BJ (cell line): ENCODE measurements at regions of chr10 and their contacts with region 1.

Region 1: DNA sequence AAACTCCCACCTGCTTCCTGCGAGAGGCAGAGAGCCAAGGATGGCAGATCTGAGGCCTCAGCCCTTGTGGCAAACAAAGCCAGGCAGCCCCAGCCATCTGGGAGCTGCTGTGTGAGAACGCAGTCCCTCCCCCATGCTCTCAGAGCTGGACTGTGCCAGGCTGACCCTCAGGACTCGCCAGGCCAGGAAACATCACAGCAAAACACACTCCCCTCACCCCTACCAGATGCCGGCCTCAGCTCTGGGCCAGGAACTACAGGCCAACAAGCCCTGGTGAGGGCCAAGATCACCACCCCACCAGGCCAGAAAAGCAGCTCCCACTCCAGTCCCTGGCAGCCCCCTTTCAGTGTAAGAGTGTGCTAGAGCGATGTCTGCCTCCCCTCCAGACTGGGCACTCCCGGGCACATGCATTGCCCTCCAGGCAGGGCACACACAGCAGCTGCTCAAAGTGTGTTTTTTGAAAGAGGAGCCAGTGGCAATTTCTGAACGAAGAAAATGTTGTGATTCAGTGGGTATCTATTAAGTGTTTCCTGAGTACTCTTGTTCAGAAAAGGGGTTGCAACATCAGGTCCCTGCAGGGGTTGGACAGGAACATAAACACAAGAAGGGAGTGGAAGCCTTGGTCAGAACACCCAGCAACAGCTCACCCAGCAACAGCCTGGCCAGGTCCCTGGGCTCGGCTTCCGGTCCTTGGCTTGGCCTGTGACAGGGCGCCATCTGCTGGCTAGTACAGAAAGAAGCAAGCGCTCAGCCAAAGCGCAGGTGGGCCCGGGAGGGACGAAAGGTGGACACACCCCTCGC is 18.3 kb downstream of the LRRC20 start:
- DNase-seq: peak; percentile 81
- H3K4me3 ChIP-seq: peak overlapping the region; percentile 9; the same call in 1 of the 2 replicates
- H3K27me3 ChIP-seq: no peaks in the 10 kb centered on the region
- CTCF ChIP-seq: peak; percentile 95

Region 2: DNA sequence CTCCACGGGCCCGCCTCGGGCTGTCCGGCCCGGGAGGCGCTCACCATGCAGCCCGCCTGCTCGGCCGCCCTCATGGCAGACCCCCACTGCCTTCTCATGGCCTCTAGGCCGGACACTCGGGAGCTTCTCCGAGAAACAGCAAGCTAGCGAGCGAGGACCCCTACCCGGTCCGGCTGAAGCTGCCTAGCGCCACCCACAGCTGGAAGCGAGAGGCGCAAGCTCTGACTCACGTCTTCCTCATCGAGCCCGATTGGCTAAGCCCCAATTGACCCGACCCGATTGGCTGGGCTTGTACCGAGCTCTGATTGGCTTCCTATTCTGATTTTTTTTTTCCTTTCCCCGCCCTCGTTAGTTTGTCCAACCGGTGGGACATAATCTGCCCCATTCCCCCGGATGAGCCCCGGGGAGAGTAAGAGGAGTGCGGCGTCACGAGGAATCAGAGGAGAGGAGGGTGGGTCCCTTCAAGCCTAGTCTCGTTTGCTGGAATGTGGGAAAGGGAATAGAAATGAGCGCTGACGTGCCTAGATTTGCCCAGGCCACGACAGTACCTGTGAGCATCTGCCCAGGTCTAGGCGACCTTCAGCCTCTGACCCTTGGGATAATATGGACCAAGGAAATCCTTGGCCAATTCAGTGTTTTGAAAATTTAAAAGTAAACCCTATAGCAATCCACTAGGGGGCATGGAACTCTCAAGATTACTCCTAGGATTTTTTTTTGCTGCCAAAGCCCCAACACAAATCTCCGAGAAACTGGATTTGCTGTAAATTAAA is 217.5 kb before region 1 on chr10 and contains the start of gene TYSND1:
- CTCF ChIA-PET with region 1: interaction called, 15 read pairs
- POLR2A ChIA-PET with region 1: no interaction called
- DNase-seq: peak; percentile 89
- H3K4me3 ChIP-seq: peak within 1 kb of the TSS; percentile 51
- H3K27me3 ChIP-seq: no peaks in the 10 kb centered on the region
- CTCF ChIP-seq: peak; percentile 90
- polyA plus RNA-seq, gene TYSND1: 2.7 and 5.3 TPM in 2 replicates

Region 3: GRCh38 chr10:70221030-70221429 is 143.1 kb before region 1 on chr10:
- CTCF ChIA-PET with region 1: interaction called, 219 read pairs
- POLR2A ChIA-PET with region 1: interaction called, 4 read pairs
- DNase-seq: no peak
- H3K4me3 ChIP-seq: no peak overlapping the region
- H3K27me3 ChIP-seq: no peaks in the 10 kb centered on the region
- CTCF ChIP-seq: no peak

Region 4: DNA sequence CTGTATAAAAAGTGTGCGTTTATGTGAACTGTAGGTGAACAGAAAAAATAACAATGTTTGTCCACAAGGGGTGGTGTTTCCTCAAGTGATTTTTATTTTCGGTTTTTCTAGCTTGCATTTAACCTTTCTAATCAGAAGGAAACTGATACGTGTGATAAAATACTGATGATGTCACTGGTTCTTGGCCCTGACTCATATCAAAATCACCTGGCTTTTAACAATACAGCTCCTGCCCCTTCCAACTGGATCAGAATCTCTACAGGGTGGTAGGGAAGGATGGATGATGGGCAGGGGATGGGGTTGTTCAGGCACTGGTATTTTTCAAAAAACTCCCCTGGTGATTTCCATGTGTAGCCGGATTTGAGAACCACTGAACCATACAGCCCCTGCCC is 91.2 kb before region 1 on chr10:
- CTCF ChIA-PET with region 1: interaction called, 25 read pairs
- POLR2A ChIA-PET with region 1: no interaction called
- DNase-seq: no peak
- H3K4me3 ChIP-seq: no peak overlapping the region
- H3K27me3 ChIP-seq: peaks cover 6% of the 10 kb centered on the region
- CTCF ChIP-seq: peak; percentile 41; the same call in 1 of the 2 replicates

Region 5: GRCh38 chr10:70348228-70348850 is 15.8 kb before region 1 on chr10:
- CTCF ChIA-PET with region 1: interaction called, 18 read pairs
- POLR2A ChIA-PET with region 1: no interaction called
- DNase-seq: no peak
- H3K4me3 ChIP-seq: no peak overlapping the region
- H3K27me3 ChIP-seq: no peaks in the 10 kb centered on the region
- CTCF ChIP-seq: peak; percentile 73

Region 6: GRCh38 chr10:70381471-70382421 is 17.6 kb after region 1 on chr10:
- CTCF ChIA-PET with region 1: interaction called, 14 read pairs
- POLR2A ChIA-PET with region 1: interaction called, 7 read pairs
- DNase-seq: no peak
- H3K4me3 ChIP-seq: peak overlapping the region; percentile 76
- H3K27me3 ChIP-seq: peaks cover 4% of the 10 kb centered on the region; the same call in 1 of the 2 replicates
- CTCF ChIP-seq: no peak

Region 7: DNA sequence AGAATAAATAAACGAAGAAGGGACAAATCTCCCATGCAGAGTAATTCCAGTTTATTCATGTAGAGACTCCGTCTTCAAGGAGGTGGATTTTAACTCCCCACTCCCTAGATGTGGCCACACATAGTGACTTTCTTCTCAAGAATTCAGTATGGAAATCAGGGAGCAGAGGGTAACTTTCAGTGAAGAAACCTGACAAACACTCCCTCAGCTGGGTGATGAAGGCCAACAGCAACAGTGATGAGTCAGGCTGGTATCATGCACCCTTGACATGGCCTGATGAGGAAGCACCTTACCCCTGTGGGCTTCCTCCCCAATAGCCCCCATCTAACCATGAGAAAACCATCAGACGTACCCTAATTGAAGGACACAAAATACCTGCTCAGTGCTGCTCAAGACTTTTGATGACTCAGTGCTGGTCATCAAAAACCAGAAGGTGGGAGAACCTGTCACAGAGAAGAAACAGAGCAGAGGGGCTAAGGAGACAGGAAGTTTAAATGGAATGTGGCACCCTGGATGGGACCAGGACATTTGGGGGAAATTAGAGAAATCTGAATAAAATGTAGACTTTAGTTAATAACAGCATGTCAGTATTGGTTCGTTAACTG is 358.8 kb after region 1 on chr10:
- CTCF ChIA-PET with region 1: no interaction called
- POLR2A ChIA-PET with region 1: no interaction called
- DNase-seq: peak; percentile 24
- H3K4me3 ChIP-seq: no peak overlapping the region
- H3K27me3 ChIP-seq: no peaks in the 10 kb centered on the region; the same call in 1 of the 2 replicates
- CTCF ChIP-seq: no peak